ENCODE measurements at regions of chr20 and their contacts with region 1.

Region 1: GRCh38 chr20:11702721-11703518 is 214.8 kb upstream of the BTBD3 start:
- DNase-seq: no peak
- ATAC-seq: no peak
- H3K4me3 Mint-ChIP-seq: no peak overlapping the region
- H3K27ac Mint-ChIP-seq: no peak overlapping the region
- H3K4me1 Mint-ChIP-seq: no peaks in the 10 kb centered on the region
- H3K27me3 Mint-ChIP-seq: no peaks in the 10 kb centered on the region; the same call in 1 of the 2 replicates
- CTCF ChIP-seq: no peak

Region 2: GRCh38 chr20:11676630-11677284 is 26.2 kb before region 1 on chr20:
- CTCF ChIA-PET with region 1: interaction called, 10 read pairs
- POLR2A ChIA-PET with region 1: no interaction called
- DNase-seq: peak; percentile 77
- ATAC-seq: peak; percentile 97
- H3K4me3 Mint-ChIP-seq: no peak overlapping the region
- H3K27ac Mint-ChIP-seq: no peak overlapping the region
- H3K4me1 Mint-ChIP-seq: peaks cover 25% of the 10 kb centered on the region
- H3K27me3 Mint-ChIP-seq: no peaks in the 10 kb centered on the region
- CTCF ChIP-seq: peak; percentile 84

Region 3: DNA sequence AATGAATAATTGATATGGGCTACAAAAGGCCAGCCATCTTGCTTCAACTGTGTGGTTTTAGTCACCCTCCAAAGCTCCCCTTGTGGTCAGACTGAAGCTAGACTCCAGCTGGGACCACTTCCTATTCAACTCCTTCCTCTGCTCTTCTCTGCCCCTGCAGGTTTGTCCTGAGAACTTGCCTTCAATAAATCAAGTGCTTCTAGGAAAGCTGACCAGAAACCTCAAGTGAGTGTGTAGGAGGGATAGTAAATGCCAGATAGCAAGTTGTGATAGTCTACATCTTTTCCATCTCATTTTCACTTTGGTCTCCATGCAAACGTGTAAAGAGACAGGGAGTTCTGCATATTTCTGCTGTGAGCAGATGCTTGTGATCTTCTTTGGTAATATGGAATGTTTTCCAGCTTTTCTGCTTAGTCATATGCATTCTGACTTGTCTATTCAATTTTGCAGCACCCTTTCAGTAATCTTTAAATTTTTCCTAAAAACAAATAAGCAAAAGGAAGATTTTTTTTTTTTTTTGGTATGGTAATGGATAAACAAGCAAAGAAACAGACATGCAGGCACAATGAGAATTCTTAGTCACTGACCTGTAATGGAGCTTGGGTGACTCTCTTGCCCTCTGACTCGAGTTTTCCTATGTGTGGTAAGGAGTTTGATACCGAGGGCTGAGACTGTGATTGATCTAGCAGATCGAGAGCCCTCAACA is 13.5 kb after region 1 on chr20:
- CTCF ChIA-PET with region 1: interaction called, 14 read pairs
- POLR2A ChIA-PET with region 1: no interaction called
- DNase-seq: peak; percentile 29
- ATAC-seq: peak; percentile 79
- H3K4me3 Mint-ChIP-seq: no peak overlapping the region
- H3K27ac Mint-ChIP-seq: no peak overlapping the region
- H3K4me1 Mint-ChIP-seq: peaks cover 55% of the 10 kb centered on the region
- H3K27me3 Mint-ChIP-seq: no peaks in the 10 kb centered on the region; the same call in 1 of the 2 replicates
- CTCF ChIP-seq: peak; percentile 19; the same call in 1 of the 2 replicates

Region 4: DNA sequence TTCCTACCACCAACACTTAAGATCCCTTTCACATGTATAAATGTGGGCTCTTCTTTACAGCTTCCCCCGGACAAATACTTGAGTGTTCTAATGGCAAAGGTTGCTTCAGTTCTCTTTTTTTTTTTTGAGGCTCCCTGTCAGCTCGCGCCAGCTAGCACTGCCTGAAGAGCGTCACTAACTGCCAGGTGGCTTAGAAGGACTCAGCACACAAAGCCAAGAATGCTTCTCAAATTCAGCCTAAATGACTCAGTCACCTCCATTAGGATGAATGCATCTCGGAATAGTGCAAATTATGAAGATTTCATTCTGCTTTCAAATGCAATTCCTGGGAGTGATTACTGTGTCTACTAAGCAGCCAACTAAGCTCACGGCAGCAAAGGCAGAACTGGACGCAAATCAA is 64.1 kb after region 1 on chr20:
- CTCF ChIA-PET with region 1: no interaction called
- POLR2A ChIA-PET with region 1: no interaction called
- DNase-seq: no peak
- ATAC-seq: peak; percentile 89
- H3K4me3 Mint-ChIP-seq: no peak overlapping the region
- H3K27ac Mint-ChIP-seq: 0 out of 2 replicates have a peak overlapping the region, but pooled peaks have one; percentile 18
- H3K4me1 Mint-ChIP-seq: peaks cover 35% of the 10 kb centered on the region
- H3K27me3 Mint-ChIP-seq: peaks cover 19% of the 10 kb centered on the region
- CTCF ChIP-seq: no peak